ENCODE measurements at regions of chr16 and their contacts with region 1.

Region 1: GRCh38 chr16:87636072-87636684 is 33.9 kb downstream of the JPH3 start:
- DNase-seq: peak; percentile 79
- H3K4me3 Mint-ChIP-seq: peak overlapping the region; percentile 43
- H3K27ac Mint-ChIP-seq: no peak overlapping the region
- H3K4me1 Mint-ChIP-seq: peaks cover 12% of the 10 kb centered on the region
- H3K27me3 Mint-ChIP-seq: peaks cover 15% of the 10 kb centered on the region

Region 2: GRCh38 chr16:87387942-87388817 is 248.0 kb before region 1 on chr16:
- CTCF ChIA-PET with region 1: interaction called, 14 read pairs
- POLR2A ChIA-PET with region 1: interaction called, 6 read pairs
- DNase-seq: peak; percentile 92
- H3K4me3 Mint-ChIP-seq: peak overlapping the region; percentile 67
- H3K27ac Mint-ChIP-seq: peak overlapping the region; percentile 97
- H3K4me1 Mint-ChIP-seq: peaks cover 56% of the 10 kb centered on the region
- H3K27me3 Mint-ChIP-seq: no peaks in the 10 kb centered on the region

Region 3: DNA sequence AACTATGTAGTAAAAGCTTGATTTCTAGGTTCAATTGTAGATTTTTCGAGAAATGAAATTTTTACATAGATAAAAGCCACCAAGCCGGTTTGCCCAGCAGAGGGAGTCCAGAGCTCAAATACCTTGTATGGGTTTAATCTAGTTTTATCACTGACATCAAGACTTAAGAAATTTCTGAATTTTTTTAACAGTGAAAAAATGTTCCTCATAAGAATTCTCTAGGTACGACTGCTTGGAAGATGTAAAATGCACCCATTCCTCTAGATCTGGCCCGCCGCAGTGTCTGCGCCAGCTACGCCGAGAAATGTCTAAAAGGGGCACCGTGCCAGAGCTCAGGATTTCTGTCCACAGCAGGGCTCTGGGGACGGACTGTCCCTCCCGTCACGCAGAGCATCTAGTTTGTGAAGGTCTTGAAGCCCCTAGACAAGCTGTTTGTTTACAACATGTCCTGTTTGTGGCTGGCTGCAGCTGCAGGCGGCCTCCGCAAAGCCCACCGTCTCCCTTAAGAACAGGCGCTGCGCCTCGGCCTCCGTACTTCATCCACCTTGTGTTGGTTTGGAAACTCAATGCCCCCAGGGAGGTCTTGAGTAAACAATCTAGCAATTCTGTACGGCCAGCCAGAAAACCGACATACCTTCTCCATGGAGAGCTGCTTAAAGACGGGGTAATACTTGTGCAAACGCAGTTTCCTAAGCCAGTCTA is 219.2 kb before region 1 on chr16:
- CTCF ChIA-PET with region 1: interaction called, 12 read pairs
- POLR2A ChIA-PET with region 1: interaction called, 9 read pairs
- DNase-seq: no peak
- H3K4me3 Mint-ChIP-seq: no peak overlapping the region
- H3K27ac Mint-ChIP-seq: no peak overlapping the region
- H3K4me1 Mint-ChIP-seq: no peaks in the 10 kb centered on the region
- H3K27me3 Mint-ChIP-seq: no peaks in the 10 kb centered on the region

Region 4: GRCh38 chr16:87702325-87702811 is 66.2 kb after region 1 on chr16:
- CTCF ChIA-PET with region 1: no interaction called
- POLR2A ChIA-PET with region 1: no interaction called
- DNase-seq: peak; percentile 62
- H3K4me3 Mint-ChIP-seq: peak overlapping the region; percentile 8
- H3K27ac Mint-ChIP-seq: peak overlapping the region; percentile 82
- H3K4me1 Mint-ChIP-seq: peaks cover 62% of the 10 kb centered on the region
- H3K27me3 Mint-ChIP-seq: no peaks in the 10 kb centered on the region

Measured in activated CD4-positive, alpha-beta memory T cell treated with anti-CD3 and anti-CD28 coated beads, Interleukin-2, amount 10 ng/mL, durations not matched to agents 7 days and 5 days (primary cell).